MCF 10A (cell line): ENCODE measurements at regions of chr4 and their contacts with region 1.

Region 1: GRCh38 chr4:98446499-98447375 is 185.6 kb downstream of the RAP1GDS1 start:
- DNase-seq: peak; percentile 85
- H3K4me3 Mint-ChIP-seq: peak overlapping the region; percentile 49
- H3K27ac Mint-ChIP-seq: peak overlapping the region; percentile 77
- H3K4me1 Mint-ChIP-seq: peaks cover 29% of the 10 kb centered on the region
- H3K27me3 Mint-ChIP-seq: no peaks in the 10 kb centered on the region
- CTCF ChIP-seq: no peak

Region 2: DNA sequence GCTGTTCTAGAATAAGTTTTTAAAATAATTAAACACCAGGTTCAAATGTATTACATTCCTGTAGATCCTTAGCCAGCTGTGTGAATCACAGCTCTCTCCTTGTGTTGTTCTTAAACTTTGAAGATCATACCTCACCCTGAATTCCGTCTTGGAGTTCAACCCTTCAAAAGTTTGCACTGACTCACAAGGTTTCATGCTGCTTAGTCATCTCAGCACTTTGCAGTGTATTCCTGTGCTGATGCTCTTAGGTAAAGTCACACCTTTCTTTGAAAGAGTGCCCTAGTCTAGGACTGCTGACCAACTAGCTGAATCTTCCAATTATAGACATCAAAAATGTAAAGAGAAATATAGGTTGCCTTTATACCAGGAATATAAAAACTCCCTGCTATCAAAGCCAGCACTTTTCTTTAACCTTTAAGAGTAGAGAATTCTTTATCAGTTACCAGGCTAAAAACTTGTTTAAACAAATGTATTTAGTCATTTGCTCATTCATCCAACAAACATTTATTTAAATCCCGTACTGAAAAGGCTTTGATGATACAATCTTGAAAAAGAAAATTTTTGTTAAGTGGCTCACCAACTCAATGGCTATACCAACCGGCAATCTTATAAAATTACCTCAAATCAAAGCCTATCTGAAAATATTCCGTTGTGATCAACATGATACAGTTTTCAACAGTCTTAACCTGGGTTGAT is 15.9 kb before region 1 on chr4:
- CTCF ChIA-PET with region 1: interaction called, 3 read pairs
- POLR2A ChIA-PET with region 1: interaction called, 28 read pairs
- intact Hi-C with region 1: no loop called
- DNase-seq: peak; percentile 89
- H3K4me3 Mint-ChIP-seq: no peak overlapping the region
- H3K27ac Mint-ChIP-seq: peak overlapping the region; percentile 73
- H3K4me1 Mint-ChIP-seq: peaks cover 17% of the 10 kb centered on the region
- H3K27me3 Mint-ChIP-seq: no peaks in the 10 kb centered on the region
- CTCF ChIP-seq: no peak